Esophagus muscularis mucosa (tissue), 4 donors: ENCODE measurements at regions of chr9 and their contacts with region 1.

Region 1: GRCh38 chr9:127347831-127348779 is 48.9 kb upstream of the SLC2A8 start:
- DNase-seq: no peak
- H3K4me3 ChIP-seq: no peak overlapping the region
- H3K27ac ChIP-seq: no peak overlapping the region
- H3K4me1 ChIP-seq: no peaks in the 10 kb centered on the region
- H3K27me3 ChIP-seq: no peaks in the 10 kb centered on the region
- CTCF ChIP-seq: peak; percentile 23 to 57 (median 52)
- EP300 ChIP-seq: no peak
- POLR2A ChIP-seq: no peak

Region 2: GRCh38 chr9:126939821-126940221 is 408.3 kb before region 1 on chr9:
- intact Hi-C with region 1: loop called (anchors 5 kb)
- DNase-seq: no peak
- H3K4me3 ChIP-seq: no peak overlapping the region
- H3K27ac ChIP-seq: no peak overlapping the region
- H3K4me1 ChIP-seq: peaks cover 3 to 25% (median 15%) of the 10 kb centered on the region in 4 donors
- H3K27me3 ChIP-seq: no peaks in the 10 kb centered on the region
- CTCF ChIP-seq: no peak
- EP300 ChIP-seq: no peak
- POLR2A ChIP-seq: no peak

Region 3: GRCh38 chr9:127214421-127215267 is 133.5 kb before region 1 on chr9:
- intact Hi-C with region 1: loop called (anchors 5 kb)
- DNase-seq: no peak
- H3K4me3 ChIP-seq: no peak overlapping the region
- H3K27ac ChIP-seq: no peak overlapping the region
- H3K4me1 ChIP-seq: peaks cover 0 to 10% (median 2%) of the 10 kb centered on the region in 4 donors
- H3K27me3 ChIP-seq: no peaks in the 10 kb centered on the region
- CTCF ChIP-seq: peak; percentile 60 to 78 (median 66)
- EP300 ChIP-seq: no peak
- POLR2A ChIP-seq: no peak